BJ (cell line): ENCODE measurements at regions of chr19 and their contacts with region 1.

Region 1: DNA sequence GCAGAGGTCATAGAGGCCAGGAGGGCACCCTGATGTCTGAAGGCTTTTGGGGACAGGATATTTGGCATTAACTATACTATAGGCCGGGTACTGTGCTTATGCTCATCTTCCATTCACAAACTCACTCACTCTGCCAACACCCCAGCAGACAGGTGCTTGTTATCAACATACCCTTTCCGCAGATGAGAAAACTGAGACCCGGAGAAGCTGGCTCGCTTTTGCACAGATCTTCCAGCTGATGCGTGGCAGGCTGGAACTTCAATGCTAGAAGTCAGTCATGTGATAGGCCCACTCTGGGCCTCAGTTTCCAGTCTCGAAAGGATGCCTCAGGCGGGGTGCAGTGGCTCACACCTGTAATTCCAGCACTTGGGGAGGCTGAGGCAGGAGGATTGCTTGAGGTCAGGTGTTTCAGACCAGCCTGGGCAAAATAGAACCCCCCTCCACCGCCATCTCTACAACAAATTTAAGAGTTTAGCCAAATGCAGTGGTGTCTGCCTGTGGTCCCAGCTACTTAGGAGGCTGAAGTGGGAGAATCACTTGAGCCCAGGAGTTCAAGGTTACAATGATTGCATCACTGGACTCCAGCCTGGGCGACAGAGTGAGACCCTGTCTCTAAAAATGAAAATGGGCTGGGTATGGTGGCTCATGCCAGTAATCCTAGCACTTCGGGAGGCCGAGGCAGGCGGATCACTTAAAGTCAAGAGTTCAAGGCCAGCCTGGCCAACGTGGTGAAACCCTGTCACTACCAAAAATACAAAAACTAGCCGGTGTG is 9.5 kb downstream of the CNN1 start:
- DNase-seq: no peak
- H3K4me3 ChIP-seq: no peak overlapping the region
- H3K27me3 ChIP-seq: no peaks in the 10 kb centered on the region
- CTCF ChIP-seq: no peak

Region 2: DNA sequence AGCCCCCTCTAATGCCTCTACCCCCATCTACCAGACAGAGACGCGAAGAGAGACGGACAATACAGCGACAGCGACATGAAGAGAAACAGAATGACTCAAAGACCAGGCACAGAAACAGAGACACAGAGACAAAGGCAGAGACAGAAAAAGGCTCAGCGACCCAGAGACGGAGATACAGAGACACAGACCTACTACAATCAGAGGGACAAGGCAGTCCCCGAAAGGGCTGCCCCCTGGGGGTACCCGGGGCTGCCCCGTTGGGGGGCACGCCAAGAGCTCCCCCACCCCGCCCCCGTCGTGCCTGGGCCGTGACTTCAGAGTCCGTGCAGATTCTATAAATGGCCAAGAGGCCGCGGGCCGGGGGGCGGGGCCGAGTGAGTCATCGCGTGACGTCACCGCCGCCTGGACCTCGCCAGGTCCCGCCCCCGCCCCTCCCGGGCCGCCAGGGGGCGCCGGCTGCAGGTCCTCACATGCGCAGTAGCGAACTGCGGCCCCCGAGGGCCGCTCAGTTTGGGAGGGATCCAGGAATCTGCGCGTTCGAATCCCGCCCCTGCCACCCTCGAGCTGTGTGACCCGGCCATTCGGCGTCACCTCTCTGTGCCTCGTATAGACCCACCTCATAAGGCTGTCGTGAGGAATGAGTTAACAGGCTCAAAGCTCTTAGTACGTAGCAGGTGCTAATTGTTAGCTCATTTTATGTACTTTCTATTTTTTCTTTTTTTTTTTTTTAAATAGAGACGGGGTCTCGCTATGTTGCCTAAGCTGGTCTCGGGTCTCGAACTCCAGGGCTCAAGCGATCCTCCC is 12.1 kb before region 1 on chr19:
- CTCF ChIA-PET with region 1: interaction called, 17 read pairs
- POLR2A ChIA-PET with region 1: no interaction called
- DNase-seq: peak; percentile 31
- H3K4me3 ChIP-seq: peak overlapping the region; percentile 32
- H3K27me3 ChIP-seq: no peaks in the 10 kb centered on the region
- CTCF ChIP-seq: peak; percentile 80

Region 3: GRCh38 chr19:12208221-12208620 is 660.1 kb after region 1 on chr19:
- CTCF ChIA-PET with region 1: no interaction called
- POLR2A ChIA-PET with region 1: no interaction called
- DNase-seq: no peak
- H3K4me3 ChIP-seq: no peak overlapping the region
- H3K27me3 ChIP-seq: no peaks in the 10 kb centered on the region
- CTCF ChIP-seq: no peak